ENCODE measurements at regions of chr21 and their contacts with region 1.

Region 1: DNA sequence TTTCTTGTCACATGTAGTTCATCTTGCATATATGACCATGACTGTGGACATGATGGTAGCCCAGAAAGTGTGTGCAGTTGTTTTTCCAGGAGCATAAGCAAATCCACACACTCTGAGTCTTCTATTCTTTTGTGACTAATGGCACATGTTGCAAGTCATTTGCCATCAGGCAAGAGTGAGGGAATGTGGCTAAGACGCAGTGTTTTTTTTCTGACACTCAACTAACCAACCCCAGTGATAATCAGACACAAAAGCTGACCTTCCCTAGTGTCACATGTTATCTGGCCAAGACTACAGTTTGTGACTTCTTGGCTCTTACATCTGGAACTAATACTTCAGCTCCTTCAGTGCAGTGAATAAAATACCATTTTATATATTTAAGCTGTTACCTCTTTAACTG is 108.8 kb downstream of the ITSN1 start:
- DNase-seq: no peak
- ATAC-seq: no peak
- H3K4me3 ChIP-seq: no peak overlapping the region
- H3K27ac ChIP-seq: no peak overlapping the region
- H3K4me1 ChIP-seq: peaks cover 0 to 3% (median 0%) of the 10 kb centered on the region in 4 donors
- H3K27me3 ChIP-seq: no peaks in the 10 kb centered on the region
- CTCF ChIP-seq: no peak
- POLR2A ChIP-seq: no peak

Region 2: GRCh38 chr21:33588485-33589335 is 162.4 kb before region 1 on chr21 and contains the start of gene DONSON:
- intact Hi-C with region 1: no loop called
- DNase-seq: peak; percentile 96
- ATAC-seq: peak; percentile 93 to 98 (median 94)
- H3K4me3 ChIP-seq: peak within 1 kb of the TSS; percentile 81 to 86 (median 85)
- H3K27ac ChIP-seq: peak within 1 kb of the TSS; percentile 86 to 95 (median 93)
- H3K4me1 ChIP-seq: peaks cover 0 to 13% (median 6%) of the 10 kb centered on the region in 4 donors
- H3K27me3 ChIP-seq: no peaks in the 10 kb centered on the region
- CTCF ChIP-seq: no peak
- POLR2A ChIP-seq: peak; percentile 81
- total RNA-seq, gene DONSON: 6.0 to 13.7 (median 8.4) TPM

Region 3: DNA sequence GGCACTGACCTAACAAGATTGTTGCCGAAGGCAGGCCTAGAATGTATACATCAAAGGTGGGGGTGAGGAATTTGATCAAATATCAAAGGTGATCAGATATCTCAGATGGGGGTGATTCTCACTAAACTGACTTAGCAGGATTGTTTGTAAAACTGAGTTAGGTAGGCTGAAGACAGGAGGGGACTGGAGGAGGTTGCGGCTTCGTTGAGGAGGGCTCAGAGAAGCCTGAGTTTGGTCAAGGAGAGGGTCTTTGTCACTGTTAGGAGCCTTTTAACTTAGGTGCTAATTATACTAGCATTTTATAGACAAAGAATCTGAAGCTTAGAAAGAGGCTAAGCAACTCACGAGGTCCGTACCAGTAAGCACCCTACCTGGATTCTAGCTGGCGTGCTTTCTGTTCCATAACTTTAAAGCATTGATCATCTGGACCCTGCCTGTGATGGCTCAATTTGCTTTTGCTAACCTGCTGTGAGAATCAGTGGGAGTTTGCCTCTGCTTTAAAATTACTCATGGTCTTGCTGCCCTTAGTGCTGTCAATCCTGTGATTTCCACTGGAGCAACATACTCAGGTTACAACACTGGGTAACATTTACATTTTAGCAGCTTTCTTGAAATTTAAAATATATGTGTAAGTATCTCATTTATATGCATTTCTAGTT is 59.0 kb before region 1 on chr21:
- intact Hi-C with region 1: loop called in 1 of 2 experiments (anchors 10 kb)
- DNase-seq: no peak
- ATAC-seq: peak in 1 of 4 donors; percentile 29
- H3K4me3 ChIP-seq: no peak overlapping the region
- H3K27ac ChIP-seq: no peak overlapping the region
- H3K4me1 ChIP-seq: peaks cover 0 to 21% (median 7%) of the 10 kb centered on the region in 4 donors
- H3K27me3 ChIP-seq: no peaks in the 10 kb centered on the region
- CTCF ChIP-seq: no peak
- POLR2A ChIP-seq: no peak

Measured in right lobe of liver (tissue), 6 donors.